CD8-positive, alpha-beta memory T cell (primary cell): ENCODE measurements at regions of chr19 and their contacts with region 1.

Region 1: DNA sequence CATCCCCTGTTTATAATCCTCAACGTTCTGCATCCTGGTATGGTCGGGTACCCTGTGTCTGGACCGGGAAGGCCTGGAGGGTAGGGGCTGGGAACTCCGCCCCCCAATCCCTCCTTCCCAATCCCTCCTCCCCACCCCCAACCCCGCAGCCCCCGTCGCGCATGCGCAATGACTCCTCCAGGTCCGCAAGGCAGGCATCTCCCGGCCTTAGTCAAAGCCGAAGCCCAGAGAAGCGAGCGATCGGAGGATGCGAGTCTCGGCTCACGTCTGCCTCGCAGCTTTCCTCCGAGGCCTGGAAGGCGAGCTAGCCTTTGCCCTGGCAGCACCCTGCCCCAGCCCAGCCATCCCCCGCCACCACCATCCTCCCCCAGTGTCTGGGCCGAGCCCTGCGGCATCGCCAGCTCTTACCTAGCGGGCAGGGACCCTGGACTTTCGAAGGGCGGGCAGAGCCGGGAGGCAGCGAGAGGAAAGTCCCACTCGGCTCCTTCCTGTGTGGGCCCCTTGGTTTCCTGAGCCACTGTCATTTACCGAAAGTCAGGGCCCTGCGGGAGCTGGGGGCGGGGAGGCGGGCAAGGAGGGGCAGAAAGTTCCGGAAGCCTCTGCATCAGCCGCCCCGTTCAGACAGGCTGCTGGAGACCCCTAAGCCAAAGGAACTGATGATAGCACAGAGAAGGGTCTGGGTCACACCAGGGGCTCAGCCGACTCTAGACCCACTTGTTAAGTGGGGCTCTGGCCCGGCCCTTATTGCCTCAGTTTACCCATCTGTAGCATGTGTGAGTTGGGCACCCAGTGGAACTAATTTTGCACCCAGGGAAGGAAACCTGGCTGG is at the start of gene JAK3:
- DNase-seq: peak; percentile 74 to 89 (median 81)
- H3K4me3 ChIP-seq: peak within 1 kb of the TSS; percentile 80
- H3K4me3 Mint-ChIP-seq: peak within 1 kb of the TSS; percentile 87 to 97 (median 93)
- H3K27ac ChIP-seq: peak within 1 kb of the TSS; percentile 69
- H3K27ac Mint-ChIP-seq: peak within 1 kb of the TSS; percentile 94 to 98 (median 96)
- H3K4me1 ChIP-seq: peaks cover 63% of the 10 kb centered on the region
- H3K4me1 Mint-ChIP-seq: peaks cover 57 to 77% (median 72%) of the 10 kb centered on the region in 3 donors
- H3K27me3 ChIP-seq: no peaks in the 10 kb centered on the region
- H3K27me3 Mint-ChIP-seq: peaks cover 0 to 3% of the 10 kb centered on the region in 2 donors
- total RNA-seq, gene JAK3: 119 to 125 TPM

Region 2: GRCh38 chr19:17757125-17757524 is 90.6 kb before region 1 on chr19:
- CTCF ChIA-PET with region 1: no interaction called
- POLR2A ChIA-PET with region 1: no interaction called
- DNase-seq: no peak
- H3K4me3 ChIP-seq: no peak overlapping the region
- H3K4me3 Mint-ChIP-seq: no peak overlapping the region
- H3K27ac ChIP-seq: no peak overlapping the region
- H3K27ac Mint-ChIP-seq: no peak overlapping the region
- H3K4me1 ChIP-seq: peaks cover 28% of the 10 kb centered on the region
- H3K4me1 Mint-ChIP-seq: peaks cover 14 to 38% (median 22%) of the 10 kb centered on the region in 3 donors
- H3K27me3 ChIP-seq: no peaks in the 10 kb centered on the region
- H3K27me3 Mint-ChIP-seq: peaks cover 0 to 1% of the 10 kb centered on the region in 2 donors

Region 3: GRCh38 chr19:17932485-17933338 is 85.0 kb after region 1 on chr19 and contains the start of gene CCDC124:
- CTCF ChIA-PET with region 1: interaction called, 213 read pairs
- POLR2A ChIA-PET with region 1: interaction called, 5 read pairs
- DNase-seq: peak; percentile 86 to 95 (median 93)
- H3K4me3 ChIP-seq: peak within 1 kb of the TSS; percentile 83
- H3K4me3 Mint-ChIP-seq: peak within 1 kb of the TSS; percentile 84 to 97 (median 92)
- H3K27ac ChIP-seq: peak within 1 kb of the TSS; percentile 82
- H3K27ac Mint-ChIP-seq: peak within 1 kb of the TSS; percentile 94 to 100 (median 96)
- H3K4me1 ChIP-seq: peaks cover 14% of the 10 kb centered on the region
- H3K4me1 Mint-ChIP-seq: peaks cover 14 to 31% (median 16%) of the 10 kb centered on the region in 3 donors
- H3K27me3 ChIP-seq: no peaks in the 10 kb centered on the region
- H3K27me3 Mint-ChIP-seq: no peaks in the 10 kb centered on the region
- total RNA-seq, gene CCDC124: 184 to 195 TPM

Region 4: GRCh38 chr19:17947815-17948513 is 100.2 kb after region 1 on chr19:
- CTCF ChIA-PET with region 1: no interaction called
- POLR2A ChIA-PET with region 1: no interaction called
- DNase-seq: peak; percentile 93 to 97 (median 95)
- H3K4me3 ChIP-seq: no peak overlapping the region
- H3K4me3 Mint-ChIP-seq: peak overlapping the region; percentile 66 to 92 (median 82)
- H3K27ac ChIP-seq: peak overlapping the region; percentile 51
- H3K27ac Mint-ChIP-seq: peak overlapping the region in 6 of 8 donors; percentile 21 to 100 (median 92)
- H3K4me1 ChIP-seq: peaks cover 50% of the 10 kb centered on the region
- H3K4me1 Mint-ChIP-seq: peaks cover 41 to 54% (median 47%) of the 10 kb centered on the region in 3 donors
- H3K27me3 ChIP-seq: peaks cover 33% of the 10 kb centered on the region
- H3K27me3 Mint-ChIP-seq: peaks cover 30 to 36% of the 10 kb centered on the region in 2 donors